Aorta (tissue), 5 donors: ENCODE measurements at regions of chr1 and their contacts with region 1.

Region 1: GRCh38 chr1:186325239-186325638 is 49.8 kb downstream of the TPR start:
- DNase-seq: no peak
- ATAC-seq: no peak
- H3K4me3 ChIP-seq: no peak overlapping the region
- H3K27ac ChIP-seq: no peak overlapping the region
- H3K4me1 ChIP-seq: no peaks in the 10 kb centered on the region
- H3K27me3 ChIP-seq: no peaks in the 10 kb centered on the region

Region 2: DNA sequence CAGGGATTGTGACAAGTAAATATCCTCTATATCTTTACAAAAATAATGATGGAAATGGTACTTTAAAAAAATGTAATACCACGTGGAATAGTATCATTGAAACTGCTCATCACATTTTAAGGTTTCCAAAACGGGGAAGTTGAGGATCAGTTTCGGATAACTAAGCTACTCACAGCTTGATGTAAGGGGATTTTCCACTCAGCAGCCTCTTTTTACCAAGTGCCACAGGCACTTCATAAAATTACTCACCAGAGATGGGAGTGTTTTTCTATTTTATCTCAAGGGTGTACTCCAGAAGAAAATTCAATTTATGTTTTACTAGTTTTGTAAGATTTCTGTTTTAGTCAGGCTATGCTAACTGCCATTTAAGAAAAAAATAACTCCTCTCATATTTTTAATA is 41.9 kb before region 1 on chr1:
- intact Hi-C with region 1: no loop called
- DNase-seq: no peak
- ATAC-seq: no peak
- H3K4me3 ChIP-seq: no peak overlapping the region
- H3K27ac ChIP-seq: no peak overlapping the region
- H3K4me1 ChIP-seq: no peaks in the 10 kb centered on the region
- H3K27me3 ChIP-seq: no peaks in the 10 kb centered on the region

Region 3: GRCh38 chr1:186363891-186364290 is 38.7 kb after region 1 on chr1:
- intact Hi-C with region 1: loop called (anchors 5 kb)
- DNase-seq: no peak
- ATAC-seq: no peak
- H3K4me3 ChIP-seq: no peak overlapping the region
- H3K27ac ChIP-seq: no peak overlapping the region
- H3K4me1 ChIP-seq: no peaks in the 10 kb centered on the region
- H3K27me3 ChIP-seq: no peaks in the 10 kb centered on the region